BJ (cell line): ENCODE measurements at regions of chr10 and their contacts with region 1.

Region 1: DNA sequence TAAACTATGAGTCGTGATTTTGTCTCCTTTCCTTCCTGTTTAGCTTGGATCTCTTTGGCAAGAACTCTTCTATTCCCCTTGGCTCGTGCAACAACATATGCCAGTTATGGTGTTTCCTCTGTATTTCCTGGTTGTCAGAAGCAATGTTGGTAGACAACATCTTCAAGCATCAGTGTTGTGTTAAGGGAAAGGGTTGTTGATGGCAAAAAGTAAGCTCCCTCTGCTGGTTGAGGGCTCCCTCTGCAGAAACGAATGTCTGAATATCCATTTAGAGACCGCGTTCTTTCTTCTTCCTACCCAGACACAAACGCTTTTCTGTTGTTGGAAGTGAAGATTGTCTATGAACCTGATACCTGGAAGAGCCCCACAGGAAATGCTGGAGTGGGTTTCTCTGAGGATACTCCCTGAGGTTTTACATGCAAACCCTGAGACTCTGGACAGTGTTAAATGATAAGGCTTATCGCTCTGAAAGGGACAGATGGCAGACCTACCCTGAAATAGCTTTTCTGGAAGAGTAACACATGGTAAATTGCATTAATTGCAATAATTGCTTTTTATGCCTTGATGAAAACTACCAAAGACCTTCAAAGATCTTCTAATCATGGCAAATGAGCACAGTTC is 23.5 kb upstream of the C1QL3 start:
- DNase-seq: no peak
- H3K4me3 ChIP-seq: no peak overlapping the region
- H3K27me3 ChIP-seq: no peaks in the 10 kb centered on the region
- CTCF ChIP-seq: peak; percentile 78

Region 2: GRCh38 chr10:16559236-16559773 is 14.1 kb after region 1 on chr10:
- CTCF ChIA-PET with region 1: interaction called, 19 read pairs
- POLR2A ChIA-PET with region 1: no interaction called
- DNase-seq: no peak
- H3K4me3 ChIP-seq: no peak overlapping the region
- H3K27me3 ChIP-seq: no peaks in the 10 kb centered on the region
- CTCF ChIP-seq: no peak